Activated T-helper 2 cell treated with anti-CD3 and anti-CD28 coated beads, Interferon-gamma antibody, Interleukin-2, Interleukin-4, amounts not matched to agents 10 μg/mL and 5 μg/mL and 100 μg/mL, durations not matched to agents 14 hours and 24 hours and 36 hours (primary cell): ENCODE measurements at regions of chr16 and their contacts with region 1.

Region 1: GRCh38 chr16:54929090-54930004 is 1.3 kb upstream of the IRX5 start:
- DNase-seq: peak; percentile 94
- H3K4me3 Mint-ChIP-seq: peak overlapping the region; percentile 90
- H3K27ac Mint-ChIP-seq: peak overlapping the region; percentile 77
- H3K4me1 Mint-ChIP-seq: peaks cover 23% of the 10 kb centered on the region
- H3K27me3 Mint-ChIP-seq: peaks cover 70% of the 10 kb centered on the region

Region 2: DNA sequence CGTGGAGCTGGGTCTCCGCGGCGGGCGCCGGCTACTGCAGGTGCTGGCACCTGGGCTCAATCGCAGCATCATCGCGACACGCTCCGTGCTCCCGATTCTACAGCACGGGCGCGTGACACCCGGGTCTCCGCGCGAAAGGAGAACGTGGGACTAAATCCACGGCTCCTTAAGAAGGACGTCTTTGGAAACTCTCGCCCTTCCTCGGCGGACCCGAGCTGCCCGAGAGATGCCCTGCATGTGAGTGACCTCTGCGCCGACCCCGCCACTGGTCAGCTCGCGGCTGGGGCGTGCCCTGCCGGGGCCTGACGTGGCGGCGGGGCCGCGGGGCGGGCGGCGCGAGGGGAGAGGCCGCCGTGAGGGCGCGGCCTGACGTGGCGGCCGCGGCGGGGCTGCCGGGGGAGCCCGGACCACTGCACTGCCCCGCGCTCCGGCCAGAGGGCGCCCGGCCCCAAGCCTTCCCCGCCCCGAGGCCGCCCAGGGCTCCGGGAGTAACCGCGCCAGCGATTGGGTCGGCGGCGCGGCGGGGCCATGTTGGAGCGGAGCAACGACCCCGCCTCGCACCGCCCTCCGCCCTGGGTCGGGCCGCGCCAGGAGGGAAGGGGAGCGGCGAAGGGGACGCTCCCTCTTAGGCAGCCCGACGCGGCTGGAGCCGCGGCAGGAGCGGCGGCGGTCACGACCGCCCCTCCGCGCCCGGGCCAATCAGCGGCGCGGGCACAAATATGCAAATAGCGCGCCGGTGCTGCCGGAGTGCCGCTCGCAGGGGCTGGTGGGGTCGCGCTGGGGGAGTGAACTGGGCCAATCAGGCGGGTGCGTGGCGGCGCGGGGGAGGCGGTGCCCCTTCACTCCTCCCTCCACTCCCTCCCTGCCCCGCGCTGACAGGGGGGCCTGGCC is 1798.9 kb before region 1 on chr16:
- intact Hi-C with region 1: loop called (anchors 5 kb)
- DNase-seq: peak; percentile 91
- H3K4me3 Mint-ChIP-seq: peak overlapping the region; percentile 78
- H3K27ac Mint-ChIP-seq: peak overlapping the region; percentile 67
- H3K4me1 Mint-ChIP-seq: peaks cover 23% of the 10 kb centered on the region
- H3K27me3 Mint-ChIP-seq: no peaks in the 10 kb centered on the region

Region 3: GRCh38 chr16:53743149-53743566 is 1186.2 kb before region 1 on chr16:
- intact Hi-C with region 1: loop called (anchors 10 kb)
- DNase-seq: no peak
- H3K4me3 Mint-ChIP-seq: no peak overlapping the region
- H3K27ac Mint-ChIP-seq: no peak overlapping the region
- H3K4me1 Mint-ChIP-seq: peaks cover 23% of the 10 kb centered on the region
- H3K27me3 Mint-ChIP-seq: no peaks in the 10 kb centered on the region

Region 4: GRCh38 chr16:53892155-53892554 is 1037.2 kb before region 1 on chr16:
- intact Hi-C with region 1: loop called (anchors 5 kb)
- DNase-seq: peak; percentile 52
- H3K4me3 Mint-ChIP-seq: peak overlapping the region; percentile 5
- H3K27ac Mint-ChIP-seq: peak overlapping the region; percentile 60
- H3K4me1 Mint-ChIP-seq: peaks cover 42% of the 10 kb centered on the region
- H3K27me3 Mint-ChIP-seq: no peaks in the 10 kb centered on the region

Region 5: DNA sequence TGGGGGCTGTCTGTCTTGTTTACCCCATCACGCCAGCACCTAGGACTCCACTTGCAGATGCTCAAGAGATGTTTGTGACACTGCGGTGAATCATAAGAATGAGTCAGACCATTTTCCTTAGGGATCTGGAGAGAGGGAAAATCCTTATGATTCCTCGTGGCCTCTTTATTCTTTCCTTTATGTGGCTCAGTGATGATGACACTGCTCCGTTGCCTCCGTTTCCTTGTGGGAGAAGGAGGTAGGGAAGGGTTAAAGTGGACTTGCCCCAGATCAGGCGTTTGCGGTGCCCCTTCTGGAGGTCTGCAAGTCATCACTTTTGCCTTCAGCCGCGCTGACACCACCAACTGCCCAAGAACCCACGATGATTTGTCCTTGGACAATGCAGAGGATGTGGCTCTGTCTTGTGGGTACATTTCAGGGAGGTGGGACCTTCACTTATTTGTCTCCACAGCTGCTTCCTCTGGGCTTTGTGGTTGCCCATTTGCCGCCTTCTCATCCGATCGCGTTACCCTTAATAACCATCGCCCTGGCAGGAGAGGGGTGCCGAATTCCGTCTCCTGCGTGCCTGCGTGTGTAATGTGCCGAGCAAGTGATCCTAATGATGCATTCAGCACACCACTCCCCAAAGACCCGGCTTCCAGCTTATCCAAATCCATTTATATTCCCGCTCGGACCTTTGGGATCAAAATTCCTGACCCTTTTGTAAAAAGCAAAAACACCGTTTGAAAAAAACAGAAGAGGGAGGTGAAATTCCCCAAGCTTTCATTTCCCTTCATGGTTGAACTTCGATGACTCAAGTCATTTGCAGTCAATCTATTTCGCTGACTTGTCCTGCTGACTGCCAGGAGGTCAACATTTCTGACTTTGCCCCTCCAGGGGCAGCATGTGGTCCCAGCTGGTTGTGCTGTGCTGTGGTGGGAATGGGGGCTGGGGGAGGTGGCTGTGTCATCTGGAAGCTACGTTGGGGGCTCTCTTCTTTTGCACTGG is 555.5 kb before region 1 on chr16:
- intact Hi-C with region 1: loop called (anchors 10 kb)
- DNase-seq: no peak
- H3K4me3 Mint-ChIP-seq: no peak overlapping the region
- H3K27ac Mint-ChIP-seq: no peak overlapping the region
- H3K4me1 Mint-ChIP-seq: peaks cover 6% of the 10 kb centered on the region
- H3K27me3 Mint-ChIP-seq: peaks cover 32% of the 10 kb centered on the region